ENCODE measurements at regions of chr1 and their contacts with region 1.

Region 1: DNA sequence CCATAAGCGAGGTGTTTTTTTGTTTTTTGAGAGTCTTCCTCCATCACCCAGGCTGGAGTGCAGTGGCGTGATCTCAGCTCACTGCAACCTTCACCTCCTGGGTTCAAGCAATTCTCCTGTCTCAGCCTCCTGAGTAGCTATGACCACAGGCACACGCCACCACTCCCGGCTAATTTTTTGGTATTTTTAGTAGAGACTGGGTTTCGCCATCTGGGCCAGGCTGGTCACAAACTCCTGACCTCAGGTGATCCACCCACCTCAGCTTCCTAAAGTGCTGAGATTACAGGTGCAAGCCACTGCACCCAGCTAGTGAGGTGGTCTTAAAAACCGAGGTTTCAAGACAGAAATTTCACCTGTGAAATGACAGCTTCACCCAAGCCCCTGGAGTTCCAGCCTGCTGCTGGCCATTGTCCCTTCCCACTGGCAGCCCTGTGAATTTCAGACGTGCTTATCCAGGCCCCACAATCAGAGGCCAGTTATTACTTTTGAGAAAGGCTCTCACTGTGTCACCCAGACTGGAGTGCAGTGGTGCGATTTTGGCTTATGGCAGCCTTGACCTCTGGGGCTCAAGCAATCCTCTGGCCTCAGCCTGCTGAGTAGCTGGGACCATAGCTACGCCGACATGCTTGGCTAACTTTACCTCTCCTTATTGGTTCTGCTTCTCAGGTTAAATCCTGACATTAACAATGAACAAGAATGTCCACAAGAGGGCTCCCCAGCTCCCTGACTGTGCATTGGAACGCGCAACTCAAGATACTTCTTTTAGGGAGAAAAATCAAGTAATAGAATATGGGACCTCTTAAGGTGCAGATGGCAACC is 19.4 kb downstream of the ENO1 start:
- DNase-seq: peak; percentile 85
- H3K4me3 Mint-ChIP-seq: no peak overlapping the region
- H3K27ac Mint-ChIP-seq: peak overlapping the region; percentile 77
- H3K4me1 Mint-ChIP-seq: peaks cover 31% of the 10 kb centered on the region
- H3K27me3 Mint-ChIP-seq: no peaks in the 10 kb centered on the region

Region 2: DNA sequence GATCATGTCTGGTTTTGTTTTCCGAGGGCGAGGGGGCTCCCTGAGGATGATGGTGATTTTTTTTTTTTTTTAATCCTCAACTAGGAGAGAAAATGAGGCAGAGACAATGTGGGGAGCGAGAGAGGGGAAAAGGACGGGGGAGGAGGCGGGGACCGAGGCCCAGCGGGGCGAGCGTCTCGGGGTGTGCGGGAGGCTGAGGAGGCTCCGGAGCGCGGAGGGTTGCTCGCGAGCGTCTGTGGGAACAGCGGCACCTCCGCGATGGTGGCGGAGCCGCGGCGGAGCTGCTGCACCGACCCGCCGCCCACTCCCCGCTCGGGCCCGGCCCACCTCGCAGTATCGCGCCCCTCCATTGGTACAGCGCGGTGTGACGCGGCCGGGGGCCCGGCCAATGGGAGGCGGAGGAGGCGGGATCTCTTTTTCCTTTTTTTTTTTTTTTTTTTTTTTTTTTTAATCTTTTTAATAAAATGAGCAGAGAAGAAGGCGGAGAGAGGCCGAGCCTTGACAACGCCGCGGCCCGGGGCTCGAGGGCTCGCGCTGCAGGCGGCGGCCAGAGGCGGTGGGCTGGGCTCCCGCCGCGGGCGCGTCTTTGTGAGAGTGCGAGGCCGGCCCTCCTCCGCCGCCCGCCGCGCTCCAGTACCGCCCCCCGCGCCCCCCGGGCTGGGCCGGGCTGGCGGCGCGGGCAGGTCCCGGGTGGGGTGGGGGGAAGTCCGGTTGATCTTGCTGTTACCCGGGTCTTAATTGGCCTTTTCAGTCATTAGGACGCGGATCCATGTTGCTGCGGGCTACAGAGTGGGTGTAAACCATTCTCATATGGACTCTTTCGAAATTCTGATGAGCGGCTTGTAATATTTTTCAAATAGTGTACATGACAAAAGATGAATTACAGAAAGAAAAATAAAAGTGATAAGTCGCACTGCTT is 41.4 kb before region 1 on chr1 and contains the start of gene RERE:
- intact Hi-C with region 1: loop called (anchors 5 kb)
- DNase-seq: peak; percentile 99
- H3K4me3 Mint-ChIP-seq: peak within 1 kb of the TSS; percentile 96
- H3K27ac Mint-ChIP-seq: peak within 1 kb of the TSS; percentile 92
- H3K4me1 Mint-ChIP-seq: peaks cover 37% of the 10 kb centered on the region
- H3K27me3 Mint-ChIP-seq: peaks cover 7% of the 10 kb centered on the region
- total RNA-seq, gene RERE: 69.3 and 85.6 TPM in 2 replicates

Region 3: DNA sequence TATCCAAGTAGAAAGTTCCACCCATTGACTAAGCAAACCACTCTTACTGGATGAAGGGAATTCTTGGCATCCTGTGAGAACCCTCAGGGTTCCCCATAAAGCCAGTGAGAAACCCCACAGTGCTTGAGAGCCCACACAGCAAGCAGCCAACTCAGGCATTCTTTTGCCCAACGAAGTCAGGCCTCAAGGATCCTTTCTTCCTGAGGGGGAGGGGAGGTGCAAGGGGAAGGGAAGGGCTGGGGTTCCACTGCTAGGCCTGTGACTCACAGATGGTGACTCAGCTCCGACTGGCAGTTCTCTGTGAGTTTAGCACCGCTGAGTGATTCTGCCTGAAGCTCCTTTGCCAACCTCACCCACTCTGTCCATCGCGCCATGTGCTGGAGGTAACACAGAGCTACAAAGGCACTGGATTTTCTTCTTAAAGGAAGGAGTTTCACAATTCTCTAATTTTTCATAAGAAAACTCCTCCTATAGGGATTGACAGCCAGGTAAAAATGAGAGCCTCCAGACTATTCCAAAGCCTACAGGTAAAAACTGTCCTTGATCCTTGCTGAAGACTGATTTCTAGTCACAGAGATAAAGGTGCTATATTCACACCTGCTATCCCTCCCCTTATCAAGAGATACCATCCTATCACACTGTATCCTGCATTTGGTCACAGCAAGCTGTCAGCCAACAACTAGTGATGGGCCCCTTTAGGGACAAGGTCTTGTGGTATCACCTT is 14.6 kb after region 1 on chr1:
- intact Hi-C with region 1: loop called (anchors 2 kb)
- DNase-seq: peak; percentile 88
- H3K4me3 Mint-ChIP-seq: peak overlapping the region; percentile 92
- H3K27ac Mint-ChIP-seq: peak overlapping the region; percentile 77
- H3K4me1 Mint-ChIP-seq: peaks cover 59% of the 10 kb centered on the region
- H3K27me3 Mint-ChIP-seq: no peaks in the 10 kb centered on the region